Cardiac septum (tissue), 1 donor: ENCODE measurements at regions of chr15 and their contacts with region 1.

Region 1: GRCh38 chr15:25850154-25851111 is 12.7 kb downstream of the ATP10A start:
- DNase-seq: peak; percentile 87

Region 2: DNA sequence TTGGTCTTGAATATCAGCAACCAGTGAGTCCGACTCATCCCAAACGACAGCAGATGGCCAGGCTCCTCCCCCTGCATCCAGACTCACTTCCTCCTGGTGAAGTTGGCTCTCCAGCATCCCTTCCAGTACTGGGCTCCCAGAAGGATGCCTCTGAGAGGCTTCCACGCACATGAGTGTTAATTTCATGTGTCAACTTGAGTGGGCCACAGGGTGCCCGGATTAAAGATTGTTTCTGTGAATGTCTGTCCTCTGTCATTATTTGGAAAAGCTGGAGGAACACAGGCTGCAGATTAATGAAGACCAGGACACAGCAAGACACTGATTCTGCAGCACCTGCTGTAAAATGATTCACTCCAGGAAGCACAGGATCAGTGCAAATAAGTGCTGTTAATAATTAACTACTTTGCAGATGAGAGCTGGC is 87.1 kb before region 1 on chr15:
- intact Hi-C with region 1: no loop called
- DNase-seq: no peak

Region 3: DNA sequence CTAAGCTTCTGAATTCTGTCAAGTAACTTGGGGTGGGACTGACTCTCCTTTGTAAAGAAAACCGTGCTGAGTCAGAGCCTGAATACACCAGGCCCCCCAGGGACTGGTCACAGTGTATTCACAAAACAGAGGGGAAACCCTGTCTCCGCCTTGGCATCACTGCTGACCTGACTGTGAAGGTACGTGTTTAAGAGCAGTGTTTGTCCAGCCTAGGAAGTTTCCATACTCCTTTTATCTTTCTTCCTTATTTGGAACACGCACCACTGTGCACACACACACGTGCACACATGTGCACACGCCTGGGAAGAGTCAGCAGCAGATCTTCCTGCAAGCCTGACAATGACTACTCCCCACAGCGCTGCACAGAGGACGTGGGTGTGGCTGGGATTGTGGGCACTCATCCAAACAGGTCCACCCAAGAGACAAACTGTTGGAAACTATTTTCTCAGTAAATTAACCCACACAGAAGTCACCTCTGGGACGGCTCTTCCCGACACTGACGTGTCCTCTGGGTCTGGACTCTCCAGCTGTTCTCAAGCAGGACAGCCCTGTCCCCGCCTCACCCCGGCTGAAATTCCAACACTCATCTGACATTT is 75.0 kb before region 1 on chr15:
- intact Hi-C with region 1: loop called (anchors 2 kb)
- DNase-seq: no peak